Activated B cell treated with CpG ODN at 0.5 μM for 24 hours (primary cell): ENCODE measurements at regions of chr13 and their contacts with region 1.

Region 1: GRCh38 chr13:67224148-67224846 is 5.8 kb downstream of the PCDH9 start:
- DNase-seq: peak; percentile 42
- ATAC-seq: peak; percentile 78
- H3K4me3 Mint-ChIP-seq: peak overlapping the region; percentile 57
- H3K27ac Mint-ChIP-seq: peak overlapping the region; percentile 64
- H3K4me1 Mint-ChIP-seq: peaks cover 36% of the 10 kb centered on the region
- H3K27me3 Mint-ChIP-seq: no peaks in the 10 kb centered on the region
- CTCF ChIP-seq: no peak

Region 2: GRCh38 chr13:65926750-65927171 is 1297.5 kb before region 1 on chr13:
- CTCF ChIA-PET with region 1: no interaction called
- POLR2A ChIA-PET with region 1: no interaction called
- intact Hi-C with region 1: loop called (anchors 5 kb)
- DNase-seq: no peak
- ATAC-seq: no peak
- H3K4me3 Mint-ChIP-seq: no peak overlapping the region
- H3K27ac Mint-ChIP-seq: no peak overlapping the region
- H3K4me1 Mint-ChIP-seq: no peaks in the 10 kb centered on the region
- H3K27me3 Mint-ChIP-seq: no peaks in the 10 kb centered on the region
- CTCF ChIP-seq: no peak

Region 3: GRCh38 chr13:66138172-66138811 is 1086.0 kb before region 1 on chr13:
- CTCF ChIA-PET with region 1: no interaction called
- POLR2A ChIA-PET with region 1: no interaction called
- intact Hi-C with region 1: loop called (anchors 5 kb)
- DNase-seq: no peak
- ATAC-seq: peak; percentile 87
- H3K4me3 Mint-ChIP-seq: peak overlapping the region; percentile 39
- H3K27ac Mint-ChIP-seq: peak overlapping the region; percentile 54
- H3K4me1 Mint-ChIP-seq: peaks cover 29% of the 10 kb centered on the region
- H3K27me3 Mint-ChIP-seq: no peaks in the 10 kb centered on the region
- CTCF ChIP-seq: no peak

Region 4: GRCh38 chr13:66492479-66492878 is 731.8 kb before region 1 on chr13:
- CTCF ChIA-PET with region 1: interaction called, 6 read pairs
- POLR2A ChIA-PET with region 1: no interaction called
- intact Hi-C with region 1: loop called (anchors 1 kb)
- DNase-seq: no peak
- ATAC-seq: peak; percentile 56
- H3K4me3 Mint-ChIP-seq: no peak overlapping the region
- H3K27ac Mint-ChIP-seq: no peak overlapping the region
- H3K4me1 Mint-ChIP-seq: peaks cover 3% of the 10 kb centered on the region
- H3K27me3 Mint-ChIP-seq: no peaks in the 10 kb centered on the region
- CTCF ChIP-seq: no peak

Region 5: GRCh38 chr13:66618702-66619101 is 605.6 kb before region 1 on chr13:
- CTCF ChIA-PET with region 1: interaction called, 16 read pairs
- POLR2A ChIA-PET with region 1: no interaction called
- intact Hi-C with region 1: loop called (anchors 1 kb)
- DNase-seq: no peak
- ATAC-seq: peak; percentile 56
- H3K4me3 Mint-ChIP-seq: no peak overlapping the region
- H3K27ac Mint-ChIP-seq: no peak overlapping the region
- H3K4me1 Mint-ChIP-seq: no peaks in the 10 kb centered on the region
- H3K27me3 Mint-ChIP-seq: no peaks in the 10 kb centered on the region
- CTCF ChIP-seq: no peak

Region 6: GRCh38 chr13:66887088-66887487 is 337.2 kb before region 1 on chr13:
- CTCF ChIA-PET with region 1: no interaction called
- POLR2A ChIA-PET with region 1: no interaction called
- intact Hi-C with region 1: loop called (anchors 5 kb)
- DNase-seq: no peak
- ATAC-seq: peak; percentile 84
- H3K4me3 Mint-ChIP-seq: peak overlapping the region; percentile 56
- H3K27ac Mint-ChIP-seq: peak overlapping the region; percentile 31
- H3K4me1 Mint-ChIP-seq: peaks cover 41% of the 10 kb centered on the region
- H3K27me3 Mint-ChIP-seq: no peaks in the 10 kb centered on the region
- CTCF ChIP-seq: no peak

Region 7: DNA sequence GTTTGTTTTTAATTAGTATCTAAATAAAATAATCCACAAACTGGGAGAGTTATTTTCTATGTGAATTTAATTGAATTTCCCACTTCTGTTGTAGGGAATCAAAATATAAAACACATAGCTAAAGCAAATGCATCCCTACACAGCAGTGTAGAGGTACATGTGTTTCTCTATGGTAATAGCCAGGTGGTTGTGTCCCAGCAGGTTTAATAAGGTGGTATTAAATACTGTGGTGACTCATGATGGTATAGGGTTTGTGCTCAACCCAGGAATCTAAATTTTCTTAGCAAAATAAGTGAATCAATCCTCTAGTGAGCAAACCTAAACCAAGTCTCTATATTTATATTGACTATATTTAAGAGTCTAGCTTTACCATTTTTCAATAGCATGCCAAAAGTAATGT is 24.1 kb before region 1 on chr13:
- CTCF ChIA-PET with region 1: no interaction called
- POLR2A ChIA-PET with region 1: no interaction called
- intact Hi-C with region 1: no loop called
- DNase-seq: no peak
- ATAC-seq: no peak
- H3K4me3 Mint-ChIP-seq: no peak overlapping the region
- H3K27ac Mint-ChIP-seq: no peak overlapping the region
- H3K4me1 Mint-ChIP-seq: peaks cover 9% of the 10 kb centered on the region
- H3K27me3 Mint-ChIP-seq: no peaks in the 10 kb centered on the region
- CTCF ChIP-seq: no peak